ENCODE measurements at regions of chr2 and their contacts with region 1.

Region 1: DNA sequence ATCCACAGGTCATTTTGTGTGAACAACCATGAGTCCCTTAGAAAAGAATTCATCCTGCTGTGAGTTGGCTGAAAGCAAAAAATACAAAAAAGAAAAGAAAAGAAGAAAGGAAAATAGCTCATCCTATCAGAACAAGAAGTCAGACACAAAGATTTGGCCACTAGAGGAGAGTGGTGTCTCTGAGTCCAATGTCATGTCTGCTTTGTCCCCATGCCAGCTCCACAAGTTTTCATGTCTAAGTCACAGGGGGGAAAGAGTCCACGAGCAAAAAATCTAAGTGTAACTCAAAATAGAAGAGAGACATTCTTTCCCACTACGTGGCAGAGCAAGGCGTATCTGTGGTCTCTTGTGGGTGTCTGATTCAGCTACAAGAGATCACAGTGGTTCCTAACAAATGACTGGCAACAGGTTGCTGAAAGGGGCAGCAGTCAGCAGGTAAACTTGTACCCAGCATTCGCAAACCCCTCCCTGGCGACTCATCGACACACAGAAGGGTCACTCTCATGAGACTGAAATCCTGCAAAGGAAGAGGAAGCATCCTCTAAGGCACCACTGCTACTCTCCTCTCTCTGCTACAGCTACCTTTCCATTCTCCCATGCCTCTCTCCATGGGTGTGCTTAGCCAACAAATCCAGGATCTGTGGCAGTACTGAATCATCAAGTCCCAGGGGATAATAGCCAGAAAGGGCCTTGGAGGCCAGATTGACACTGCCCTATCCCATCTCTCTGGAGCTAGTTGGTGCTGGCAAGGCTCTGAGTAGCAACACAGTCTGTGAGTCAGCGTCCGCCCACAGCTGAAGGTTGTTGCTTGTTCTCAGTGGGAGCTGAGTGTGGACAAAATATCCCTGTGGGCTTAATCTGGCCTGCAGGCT is 123.0 kb upstream of the SLC39A10 start:
- DNase-seq: peak; percentile 88
- ATAC-seq: peak; percentile 63
- H3K4me3 Mint-ChIP-seq: peak overlapping the region; percentile 77
- H3K27ac Mint-ChIP-seq: peak overlapping the region; percentile 96
- H3K4me1 Mint-ChIP-seq: peaks cover 73% of the 10 kb centered on the region
- H3K27me3 Mint-ChIP-seq: no peaks in the 10 kb centered on the region

Region 2: DNA sequence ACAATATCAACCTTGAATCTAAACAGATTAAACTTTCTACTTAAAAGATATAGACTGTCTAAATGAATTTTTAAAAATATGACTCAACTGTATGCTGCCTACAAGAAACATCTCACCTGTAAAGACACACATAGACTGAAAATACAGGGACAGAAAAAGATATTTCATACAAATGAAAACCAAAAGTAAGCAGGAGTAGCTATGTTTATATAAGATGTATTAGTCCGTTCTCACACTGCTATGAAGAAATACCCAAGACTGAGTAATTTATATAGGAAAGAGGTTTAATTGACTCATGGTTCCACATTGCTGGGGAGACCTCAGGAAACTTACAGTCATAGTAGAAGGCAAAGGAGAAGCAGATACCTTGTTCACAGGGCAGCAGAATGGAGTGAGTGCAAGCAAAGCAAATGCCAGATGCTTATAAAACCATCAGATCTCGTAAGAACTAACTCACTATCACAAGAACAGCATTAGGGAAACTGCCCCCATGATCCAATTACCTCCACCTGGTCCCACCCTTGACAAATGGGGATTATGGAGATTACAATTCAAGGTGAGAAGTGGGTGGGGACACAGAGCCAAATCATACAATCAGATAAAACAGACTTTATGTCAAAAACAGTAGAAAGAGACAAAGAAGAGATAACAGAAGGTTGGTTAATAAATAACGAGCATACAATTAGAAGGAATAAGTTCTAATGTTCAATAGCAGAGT is 91.4 kb before region 1 on chr2:
- CTCF ChIA-PET with region 1: no interaction called
- DNase-seq: no peak
- ATAC-seq: no peak
- H3K4me3 Mint-ChIP-seq: no peak overlapping the region
- H3K27ac Mint-ChIP-seq: no peak overlapping the region
- H3K4me1 Mint-ChIP-seq: no peaks in the 10 kb centered on the region
- H3K27me3 Mint-ChIP-seq: no peaks in the 10 kb centered on the region

Region 3: GRCh38 chr2:195498176-195498575 is 35.8 kb before region 1 on chr2:
- CTCF ChIA-PET with region 1: interaction called, 15 read pairs
- DNase-seq: peak; percentile 71
- ATAC-seq: peak; percentile 61
- H3K4me3 Mint-ChIP-seq: no peak overlapping the region
- H3K27ac Mint-ChIP-seq: no peak overlapping the region
- H3K4me1 Mint-ChIP-seq: peaks cover 24% of the 10 kb centered on the region
- H3K27me3 Mint-ChIP-seq: no peaks in the 10 kb centered on the region

Region 4: DNA sequence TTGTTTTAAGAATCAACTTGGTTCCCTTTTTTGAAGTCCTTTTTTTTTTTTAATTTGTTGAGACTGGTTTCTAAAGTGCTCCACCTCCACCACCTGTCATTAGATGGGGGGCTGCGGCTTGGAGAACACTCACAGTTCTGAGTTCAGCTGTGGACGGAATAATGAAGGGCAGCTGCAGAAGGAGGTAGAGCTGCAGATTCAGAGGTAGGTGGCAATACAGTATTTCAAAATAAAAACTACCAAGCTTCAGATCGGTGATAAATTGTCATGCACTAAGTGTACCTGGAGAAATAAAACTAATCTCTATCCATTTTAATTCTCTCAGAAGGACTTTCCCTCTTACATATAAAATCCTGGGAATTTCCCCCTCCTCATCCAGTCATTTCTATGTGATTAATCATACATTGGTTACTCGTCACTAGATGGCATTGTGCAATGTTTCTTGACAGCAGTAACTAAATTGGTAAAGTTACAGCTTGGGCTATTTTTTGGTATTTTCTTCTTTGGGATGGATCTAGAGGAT is 41.9 kb after region 1 on chr2:
- CTCF ChIA-PET with region 1: interaction called, 10 read pairs
- DNase-seq: no peak
- ATAC-seq: peak; percentile 53
- H3K4me3 Mint-ChIP-seq: no peak overlapping the region
- H3K27ac Mint-ChIP-seq: peak overlapping the region; percentile 40
- H3K4me1 Mint-ChIP-seq: peaks cover 31% of the 10 kb centered on the region
- H3K27me3 Mint-ChIP-seq: no peaks in the 10 kb centered on the region

Measured in activated CD8-positive, alpha-beta memory T cell treated with anti-CD3 and anti-CD28 coated beads, Interleukin-2, amount 10 ng/mL, durations not matched to agents 7 days and 5 days (primary cell).